ENCODE measurements at regions of chr4 and their contacts with region 1.

Region 1: GRCh38 chr4:105471566-105472176 is 2.2 kb downstream of the PPA2 start:
- DNase-seq: peak; percentile 88
- H3K4me3 Mint-ChIP-seq: peak overlapping the region; percentile 96
- H3K27ac Mint-ChIP-seq: peak overlapping the region; percentile 98
- H3K4me1 Mint-ChIP-seq: peaks cover 44% of the 10 kb centered on the region
- H3K27me3 Mint-ChIP-seq: no peaks in the 10 kb centered on the region

Region 2: DNA sequence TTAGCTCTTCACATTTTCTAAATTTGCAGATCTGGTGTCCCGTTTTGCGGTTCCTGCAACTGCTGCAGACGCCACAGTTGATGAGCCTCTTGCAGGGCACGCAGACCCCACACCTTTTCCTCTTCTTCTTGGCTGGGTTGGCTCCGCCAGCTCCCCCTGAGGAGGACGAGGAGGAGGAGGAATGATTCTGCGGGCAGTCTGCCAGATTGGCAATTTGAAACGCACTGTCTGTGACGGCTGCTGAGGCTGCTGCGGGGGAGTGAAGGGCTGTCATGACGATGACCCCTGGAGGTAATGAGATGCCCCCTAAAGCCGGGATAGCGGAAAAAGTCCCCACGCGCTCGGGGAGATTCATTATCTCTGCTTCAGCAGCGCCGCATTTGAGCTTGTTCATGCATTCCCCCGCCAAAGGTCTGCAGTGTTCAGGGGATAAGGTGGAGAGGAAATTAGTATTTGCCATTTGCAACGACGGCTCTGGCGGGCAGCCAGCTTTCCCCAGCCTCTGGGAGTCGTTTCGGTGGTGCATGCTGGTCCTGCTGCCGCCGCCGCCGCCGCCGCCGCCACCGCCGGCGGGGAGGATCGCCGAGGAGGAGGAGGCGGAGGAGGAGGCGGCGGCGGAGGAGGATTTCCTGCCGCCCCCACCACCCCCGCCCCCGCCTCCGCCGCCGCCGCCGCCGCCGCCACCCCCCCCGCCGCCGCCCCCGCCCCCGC is 980.7 kb before region 1 on chr4:
- CTCF ChIA-PET with region 1: no interaction called
- intact Hi-C with region 1: loop called (anchors 5 kb)
- DNase-seq: peak; percentile 43
- H3K4me3 Mint-ChIP-seq: peak overlapping the region; percentile 44
- H3K27ac Mint-ChIP-seq: no peak overlapping the region
- H3K4me1 Mint-ChIP-seq: peaks cover 28% of the 10 kb centered on the region
- H3K27me3 Mint-ChIP-seq: peaks cover 56% of the 10 kb centered on the region

Region 3: DNA sequence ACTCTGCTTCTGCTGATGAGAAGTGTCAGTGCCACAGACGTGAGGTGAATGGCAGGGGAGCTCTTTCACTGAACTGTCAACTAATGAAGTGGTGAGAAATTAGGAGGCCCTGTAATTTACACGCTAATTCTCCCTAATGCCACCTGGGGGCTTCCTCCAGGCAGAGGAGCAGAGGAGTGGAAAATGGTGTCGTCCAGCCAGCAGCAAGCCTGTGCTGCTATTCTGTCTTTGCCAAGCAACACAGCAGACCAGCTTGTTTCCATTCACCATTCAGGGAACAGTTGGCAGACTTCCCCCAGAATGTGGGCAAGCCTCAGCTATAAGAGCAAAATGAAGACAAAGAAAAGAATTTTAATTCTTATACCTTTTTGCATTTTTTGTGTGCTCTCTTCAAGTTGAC is 570.2 kb before region 1 on chr4:
- CTCF ChIA-PET with region 1: no interaction called
- intact Hi-C with region 1: no loop called
- DNase-seq: no peak
- H3K4me3 Mint-ChIP-seq: no peak overlapping the region
- H3K27ac Mint-ChIP-seq: no peak overlapping the region
- H3K4me1 Mint-ChIP-seq: peaks cover 4% of the 10 kb centered on the region
- H3K27me3 Mint-ChIP-seq: no peaks in the 10 kb centered on the region

Region 4: DNA sequence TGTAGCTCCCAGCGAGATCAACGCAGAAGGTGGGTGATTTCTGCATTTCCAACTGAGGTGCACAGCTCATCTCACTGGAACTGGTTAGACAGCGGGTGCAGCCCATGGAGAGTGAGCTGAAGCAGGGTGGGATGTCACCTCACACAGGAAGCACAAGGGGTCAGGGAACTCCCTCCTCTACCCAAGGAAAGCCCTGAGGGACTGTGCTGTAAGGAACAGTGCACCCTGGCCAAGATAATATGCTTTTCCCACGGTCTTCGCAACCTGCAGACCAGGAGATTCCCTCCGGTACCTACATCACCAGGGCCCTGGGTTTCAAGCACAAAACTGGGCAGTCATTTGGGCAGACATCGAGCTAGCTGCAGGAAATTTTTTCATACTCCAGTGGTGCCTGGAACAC is 541.4 kb before region 1 on chr4:
- CTCF ChIA-PET with region 1: interaction called, 4 read pairs
- intact Hi-C with region 1: loop called (anchors 1 kb)
- DNase-seq: no peak
- H3K4me3 Mint-ChIP-seq: no peak overlapping the region
- H3K27ac Mint-ChIP-seq: no peak overlapping the region
- H3K4me1 Mint-ChIP-seq: peaks cover 25% of the 10 kb centered on the region
- H3K27me3 Mint-ChIP-seq: no peaks in the 10 kb centered on the region

Region 5: GRCh38 chr4:105140684-105141490 is 330.8 kb before region 1 on chr4:
- CTCF ChIA-PET with region 1: interaction called, 23 read pairs
- intact Hi-C with region 1: loop called (anchors 1 kb)
- DNase-seq: peak; percentile 59
- H3K4me3 Mint-ChIP-seq: no peak overlapping the region
- H3K27ac Mint-ChIP-seq: no peak overlapping the region
- H3K4me1 Mint-ChIP-seq: peaks cover 28% of the 10 kb centered on the region
- H3K27me3 Mint-ChIP-seq: no peaks in the 10 kb centered on the region

Region 6: DNA sequence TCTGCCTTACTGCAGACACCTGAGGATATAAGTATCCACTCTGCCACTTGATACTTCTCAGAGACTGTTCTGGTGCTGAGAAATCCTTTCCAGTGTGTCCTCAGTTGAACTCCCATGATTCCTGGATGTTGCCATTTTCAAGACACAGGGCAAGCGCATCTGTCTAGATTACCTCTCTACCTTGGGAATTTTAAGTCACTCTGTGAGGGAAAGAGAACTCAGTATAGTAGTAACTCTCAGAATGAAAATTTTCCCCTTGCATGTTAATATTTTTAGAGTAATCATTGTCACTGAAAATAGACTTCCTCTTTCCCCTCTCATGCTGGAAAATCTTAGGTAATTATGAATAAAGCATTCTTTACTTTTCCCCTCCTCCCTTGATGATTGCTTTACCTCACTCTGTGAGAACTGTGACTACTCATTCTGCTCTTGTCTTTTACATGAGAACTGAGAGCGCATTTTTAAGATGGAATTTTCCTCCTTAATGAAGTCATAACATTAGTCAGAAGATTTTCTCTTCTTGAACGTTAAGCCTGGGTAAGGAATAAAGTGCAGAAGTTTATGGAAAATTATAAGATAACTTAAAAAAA is 280.0 kb before region 1 on chr4:
- CTCF ChIA-PET with region 1: interaction called, 3 read pairs
- intact Hi-C with region 1: loop called (anchors 1 kb)
- DNase-seq: no peak
- H3K4me3 Mint-ChIP-seq: no peak overlapping the region
- H3K27ac Mint-ChIP-seq: peak overlapping the region; percentile 87
- H3K4me1 Mint-ChIP-seq: peaks cover 85% of the 10 kb centered on the region
- H3K27me3 Mint-ChIP-seq: no peaks in the 10 kb centered on the region

Region 7: GRCh38 chr4:105306158-105306781 is 165.4 kb before region 1 on chr4:
- CTCF ChIA-PET with region 1: interaction called, 3 read pairs
- intact Hi-C with region 1: loop called (anchors 1 kb)
- DNase-seq: peak; percentile 84
- H3K4me3 Mint-ChIP-seq: no peak overlapping the region
- H3K27ac Mint-ChIP-seq: peak overlapping the region; percentile 87
- H3K4me1 Mint-ChIP-seq: peaks cover 24% of the 10 kb centered on the region
- H3K27me3 Mint-ChIP-seq: no peaks in the 10 kb centered on the region

Region 8: GRCh38 chr4:105708530-105709391 is 237.1 kb after region 1 on chr4 and contains the starts of genes GSTCD and INTS12:
- CTCF ChIA-PET with region 1: interaction called, 6 read pairs
- intact Hi-C with region 1: loop called (anchors 1 kb)
- DNase-seq: peak; percentile 93
- H3K4me3 Mint-ChIP-seq: peak within 1 kb of the TSS; percentile 98
- H3K27ac Mint-ChIP-seq: peak within 1 kb of the TSS; percentile 91
- H3K4me1 Mint-ChIP-seq: peaks cover 26% of the 10 kb centered on the region
- H3K27me3 Mint-ChIP-seq: no peaks in the 10 kb centered on the region
- total RNA-seq, gene GSTCD: 15.8 to 18.2 TPM
- total RNA-seq, gene INTS12: 24.5 to 24.8 TPM

Measured in activated naive CD4-positive, alpha-beta T cell treated with anti-CD3 and anti-CD28 coated beads for 36 hours (primary cell).